Stomach (tissue), 19 donors: ENCODE measurements at regions of chr7 and their contacts with region 1.

Region 1: DNA sequence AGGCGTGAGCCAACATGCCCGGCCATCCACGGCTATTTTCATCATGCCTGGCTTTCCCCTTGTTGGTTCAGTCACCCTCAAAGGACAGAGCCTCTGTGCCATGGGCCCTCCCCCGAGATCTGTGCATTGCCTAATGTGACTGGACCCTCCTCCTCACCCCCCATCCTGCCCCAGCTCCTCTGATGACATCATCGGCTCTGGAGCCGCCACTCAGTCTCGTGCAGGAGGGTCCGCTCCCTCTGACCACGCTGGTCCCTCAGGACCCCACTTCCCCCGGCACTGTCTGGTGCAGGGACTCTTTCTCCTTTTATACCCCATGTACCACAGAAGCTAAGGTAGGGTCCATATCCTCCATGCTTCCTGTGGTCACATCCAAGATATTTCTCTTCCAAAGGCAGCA is 33.2 kb upstream of the BAIAP2L1 start:
- DNase-seq: no peak
- H3K4me3 ChIP-seq: no peak overlapping the region
- H3K27ac ChIP-seq: no peak overlapping the region
- H3K4me1 ChIP-seq: no peaks in the 10 kb centered on the region
- H3K27me3 ChIP-seq: no peaks in the 10 kb centered on the region
- CTCF ChIP-seq: no peak
- EP300 ChIP-seq: no peak
- POLR2A ChIP-seq: no peak

Region 2: GRCh38 chr7:98641646-98642500 is 207.8 kb after region 1 on chr7:
- intact Hi-C with region 1: no loop called
- DNase-seq: peak in 1 of 2 donors; percentile 60
- H3K4me3 ChIP-seq: no peak overlapping the region
- H3K27ac ChIP-seq: no peak overlapping the region
- H3K4me1 ChIP-seq: no peaks in the 10 kb centered on the region
- H3K27me3 ChIP-seq: peaks cover 0 to 5% (median 0%) of the 10 kb centered on the region in 3 donors
- CTCF ChIP-seq: no peak
- EP300 ChIP-seq: no peak
- POLR2A ChIP-seq: no peak

Region 3: DNA sequence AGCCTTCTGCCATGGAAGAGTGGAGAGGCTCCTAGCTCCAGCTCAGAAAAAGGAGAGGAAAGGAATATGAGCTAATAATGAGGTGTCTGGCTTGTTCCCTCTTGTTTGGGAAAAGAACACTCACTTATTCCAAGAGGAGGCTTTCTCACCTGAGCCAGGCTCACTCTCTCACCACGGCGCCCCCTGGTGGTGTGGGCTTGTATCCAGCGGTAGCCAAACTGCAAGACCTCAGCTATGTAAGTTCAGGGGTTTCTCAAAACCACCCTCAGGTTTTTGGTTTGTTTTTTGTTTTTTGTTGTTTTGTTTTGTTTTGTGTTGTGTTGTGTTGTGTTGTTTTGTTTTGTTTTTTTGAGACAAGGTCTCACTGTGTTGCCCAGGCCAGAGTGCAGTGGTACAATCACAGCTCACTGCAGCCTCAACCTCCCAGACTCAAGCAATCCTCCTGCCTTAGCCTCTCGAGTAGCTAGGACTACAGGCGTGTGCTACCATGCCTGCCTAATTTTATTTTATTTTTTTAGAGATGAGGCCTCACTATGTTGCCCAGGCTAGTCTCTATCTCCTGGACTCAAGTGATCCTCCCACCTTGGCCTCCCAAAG is 311.7 kb after region 1 on chr7:
- intact Hi-C with region 1: loop called (anchors 10 kb)
- DNase-seq: peak; percentile 83 to 85
- H3K4me3 ChIP-seq: no peak overlapping the region
- H3K27ac ChIP-seq: no peak overlapping the region
- H3K4me1 ChIP-seq: no peaks in the 10 kb centered on the region
- H3K27me3 ChIP-seq: peaks cover 0 to 24% (median 4%) of the 10 kb centered on the region in 3 donors
- CTCF ChIP-seq: peak in 5 of 7 experiments; percentile 56 to 81 (median 73)
- EP300 ChIP-seq: no peak
- POLR2A ChIP-seq: no peak

Region 4: DNA sequence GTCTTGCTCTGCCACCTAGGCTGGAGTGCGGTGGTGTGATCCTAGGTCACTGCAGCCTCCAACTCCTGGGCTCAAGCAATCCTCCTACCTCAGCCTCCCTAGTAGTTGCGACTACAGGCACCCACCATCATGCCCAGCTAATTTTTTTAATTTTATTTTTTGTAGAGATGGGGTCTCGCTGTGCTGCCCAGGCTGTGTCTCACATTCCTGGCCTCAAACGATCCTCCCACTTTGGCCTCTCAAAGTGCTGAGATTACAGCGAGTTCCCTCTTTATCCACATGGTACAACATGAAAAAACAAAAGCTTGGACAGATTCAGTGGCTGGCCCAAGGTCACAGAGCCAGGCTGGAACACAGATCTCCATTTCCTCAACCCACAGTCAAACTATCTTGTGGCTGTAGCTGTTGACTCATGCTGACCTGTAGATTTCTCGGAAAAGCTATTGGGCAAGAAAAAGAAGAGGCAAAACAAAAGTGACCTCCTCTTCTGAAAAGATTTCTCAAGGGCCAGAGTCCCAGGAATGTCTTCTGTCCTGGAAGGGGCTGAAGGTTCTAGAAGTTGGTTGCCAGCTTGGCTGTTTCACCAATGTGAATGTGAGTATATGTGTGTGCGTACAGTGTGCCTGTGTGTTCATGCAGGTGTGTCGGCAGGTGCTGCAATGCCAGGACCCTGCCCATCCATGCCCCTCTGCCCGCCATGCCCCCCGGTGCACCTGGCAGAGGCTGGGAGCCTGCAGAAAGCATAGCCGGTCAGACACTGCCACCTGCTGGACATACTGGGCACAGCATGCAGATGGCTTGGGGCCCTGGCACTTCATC is 407.3 kb after region 1 on chr7:
- intact Hi-C with region 1: loop called (anchors 5 kb)
- DNase-seq: peak; percentile 73 to 78
- H3K4me3 ChIP-seq: no peak overlapping the region
- H3K27ac ChIP-seq: peak overlapping the region in 1 of 5 donors; percentile 42
- H3K4me1 ChIP-seq: peaks cover 0 to 7% (median 4%) of the 10 kb centered on the region in 4 donors
- H3K27me3 ChIP-seq: peaks cover 0 to 37% (median 0%) of the 10 kb centered on the region in 3 donors
- CTCF ChIP-seq: peak in 5 of 7 experiments; percentile 91 to 98 (median 92)
- EP300 ChIP-seq: no peak
- POLR2A ChIP-seq: no peak